Cardiac septum (tissue), 1 donor: ENCODE measurements at regions of chr17 and their contacts with region 1.

Region 1: DNA sequence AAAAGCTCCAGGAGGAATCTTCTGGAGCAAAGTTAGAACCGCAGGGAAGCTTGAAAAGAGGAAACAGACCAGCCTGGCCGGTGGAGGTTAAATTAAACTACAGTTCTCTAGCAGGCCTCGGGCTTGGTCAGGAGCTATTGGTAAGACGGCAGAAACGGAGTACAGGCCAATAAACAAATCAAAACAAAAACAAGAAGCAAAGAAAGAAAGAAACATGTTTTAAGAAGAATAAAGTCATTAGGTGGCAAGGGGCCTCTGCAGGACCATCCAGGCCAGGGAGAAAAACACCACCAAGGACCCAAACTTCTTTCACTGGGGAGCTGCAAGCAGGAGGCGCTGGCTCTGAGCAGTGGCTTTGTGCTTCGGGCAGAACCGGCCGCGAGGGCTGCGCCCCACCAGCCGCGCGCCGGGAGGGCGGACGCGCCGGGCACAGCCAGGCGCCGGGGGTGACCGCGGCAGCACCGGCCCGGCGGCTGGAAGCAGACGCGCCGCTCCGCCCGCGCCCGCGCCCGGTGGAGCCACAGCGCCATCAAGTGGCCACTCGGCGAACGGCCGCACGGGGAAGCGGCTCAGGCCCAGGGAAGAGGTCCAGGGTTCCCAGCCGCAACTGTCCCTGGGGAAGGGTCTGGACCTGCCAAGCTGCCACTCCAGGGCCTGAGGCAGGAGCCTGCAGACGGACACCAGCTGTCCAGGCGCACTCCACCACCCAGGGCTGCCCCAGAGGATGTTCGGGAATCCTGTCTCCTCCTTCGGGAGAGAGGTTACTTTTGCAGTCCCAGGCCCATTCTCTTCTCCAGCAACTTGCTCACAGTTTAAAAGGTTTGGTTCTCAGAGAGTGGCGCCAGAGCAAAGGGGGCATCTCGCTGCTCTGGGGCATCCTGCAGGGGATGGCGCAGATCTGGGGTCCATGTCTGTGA is 419.4 kb downstream of the SOX9 start:
- DNase-seq: peak; percentile 84

Region 2: DNA sequence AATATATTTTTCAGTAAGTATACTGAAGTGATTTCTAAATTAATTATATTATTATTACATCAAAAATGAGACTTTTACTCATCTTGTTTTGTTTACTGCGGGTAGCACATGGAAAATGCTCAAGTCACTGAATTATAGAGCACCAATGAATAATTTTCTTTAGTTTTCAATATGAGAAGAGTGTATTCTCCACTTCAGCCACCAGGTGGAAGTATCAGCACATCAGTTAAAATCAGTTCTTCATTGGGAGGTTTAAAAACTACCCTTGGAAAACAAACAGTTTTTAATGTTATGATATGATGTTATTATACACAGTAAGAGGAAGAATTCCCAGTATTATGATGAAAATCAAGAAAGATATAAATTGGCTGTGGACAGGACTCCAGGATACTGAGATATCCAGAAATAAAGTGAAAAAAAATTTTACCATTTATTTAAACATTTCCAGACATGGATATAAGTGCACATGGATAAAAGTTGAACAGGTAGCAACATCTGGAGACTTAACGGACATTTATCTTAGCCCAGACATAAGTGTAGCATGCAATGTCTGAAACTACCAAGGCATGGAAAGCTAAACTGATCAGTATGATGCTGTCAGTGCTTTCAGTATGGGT is 1903.6 kb before region 1 on chr17:
- intact Hi-C with region 1: loop called (anchors 2 kb)
- DNase-seq: no peak

Region 3: GRCh38 chr17:71118039-71118438 is 1422.2 kb before region 1 on chr17:
- intact Hi-C with region 1: loop called (anchors 5 kb)
- DNase-seq: no peak

Region 4: DNA sequence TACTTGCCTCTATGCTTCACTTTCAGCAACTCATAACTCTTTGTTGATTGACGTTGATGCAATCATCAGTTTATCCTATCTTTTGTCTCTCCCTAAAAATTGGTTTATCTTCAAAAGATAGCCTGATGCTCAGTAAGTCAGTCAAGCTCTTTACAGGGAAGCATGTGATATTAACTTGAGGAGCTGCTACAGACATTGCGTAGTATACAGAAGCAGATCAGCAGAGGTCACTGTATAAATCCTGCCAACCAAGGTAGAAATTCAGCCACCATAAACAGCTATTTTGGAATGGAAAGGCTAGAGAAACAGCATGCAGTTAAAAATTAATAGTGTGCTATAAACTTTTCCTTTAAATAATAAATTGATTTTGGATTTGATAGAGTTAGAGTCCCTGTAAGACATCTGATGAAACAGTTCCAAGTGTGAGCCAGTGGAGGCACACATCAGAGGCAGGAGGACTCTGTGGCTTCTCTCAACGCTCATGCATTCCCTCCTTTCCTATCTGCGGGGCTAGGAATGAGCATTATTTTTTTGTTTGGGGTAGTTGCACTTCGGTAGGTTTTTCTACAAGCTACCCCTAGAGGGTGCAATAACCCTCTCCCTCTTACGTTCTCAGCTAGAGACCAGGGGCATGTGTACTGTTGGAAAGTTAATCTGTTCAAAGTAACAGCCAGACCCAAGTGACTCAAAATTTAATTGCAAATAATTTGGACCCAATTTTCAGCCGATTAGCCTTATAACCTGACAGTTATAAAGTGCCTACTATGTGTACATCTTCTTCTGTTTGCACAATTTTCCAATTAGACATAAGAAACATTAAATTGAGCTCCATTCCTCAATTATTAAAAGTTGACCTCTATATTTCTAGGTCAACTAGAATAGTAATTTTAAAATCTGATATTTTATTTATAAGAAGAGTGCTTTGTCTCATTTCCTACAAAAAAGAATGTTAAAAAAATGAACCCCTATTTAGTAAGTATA is 1067.1 kb before region 1 on chr17:
- intact Hi-C with region 1: loop called (anchors 5 kb)
- DNase-seq: no peak